ENCODE measurements at regions of chr17 and their contacts with region 1.

Region 1: GRCh38 chr17:78343187-78343542 is 16.7 kb downstream of the SOCS3 start:
- DNase-seq: no peak
- ATAC-seq: peak in 3 of 4 experiments; percentile 4 to 38 (median 4)
- H3K4me3 ChIP-seq: peak overlapping the region; percentile 29 to 30
- H3K4me3 Mint-ChIP-seq: peak overlapping the region; percentile 59 to 68 (median 64)
- H3K27ac ChIP-seq: peak overlapping the region; percentile 87
- H3K27ac Mint-ChIP-seq: peak overlapping the region; percentile 87 to 91
- H3K4me1 ChIP-seq: peaks cover 36 to 94% of the 10 kb centered on the region in 2 experiments
- H3K4me1 Mint-ChIP-seq: peaks cover 74 to 84% (median 78%) of the 10 kb centered on the region in 3 donors
- H3K27me3 ChIP-seq: no peaks in the 10 kb centered on the region
- H3K27me3 Mint-ChIP-seq: no peaks in the 10 kb centered on the region

Region 2: DNA sequence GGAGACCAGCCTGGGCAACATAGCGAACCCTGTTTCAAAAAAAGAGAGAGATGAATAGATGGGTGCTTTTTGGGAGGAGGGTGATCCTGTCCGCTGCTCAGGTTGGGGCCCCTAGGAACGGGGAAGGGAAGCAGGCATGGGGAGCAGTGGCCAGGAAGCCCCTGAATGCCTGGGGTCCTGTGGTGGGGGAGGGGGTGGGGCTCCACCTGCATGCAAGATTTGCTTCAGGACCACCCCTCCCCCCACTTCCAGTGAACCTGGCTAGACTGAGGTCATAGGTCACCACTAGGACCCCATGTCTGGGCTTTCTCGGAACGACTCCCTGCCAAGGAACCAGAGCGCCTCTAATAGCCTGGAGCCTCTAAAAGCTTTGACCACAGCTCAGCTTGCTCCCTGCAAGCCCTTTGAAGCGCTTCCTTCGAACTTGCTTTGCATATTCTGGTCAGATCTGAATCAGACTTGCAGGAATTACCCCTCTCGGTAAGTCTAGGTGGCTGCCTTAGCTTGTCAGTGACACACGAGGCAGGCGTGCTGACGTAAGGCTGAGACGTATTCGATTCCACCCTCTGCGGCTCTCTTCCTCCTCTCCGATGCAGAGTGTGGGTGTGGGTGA is 13.0 kb after region 1 on chr17:
- CTCF ChIA-PET with region 1: interaction called, 6 to 10 read pairs
- POLR2A ChIA-PET with region 1: interaction called in 1 of 2 experiments, 11 read pairs
- DNase-seq: peak; percentile 51 to 98 (median 91)
- ATAC-seq: peak; percentile 58 to 68 (median 64)
- H3K4me3 ChIP-seq: peak overlapping the region; percentile 8 to 9
- H3K4me3 Mint-ChIP-seq: peak overlapping the region; percentile 29 to 84 (median 67)
- H3K27ac ChIP-seq: peak overlapping the region; percentile 90
- H3K27ac Mint-ChIP-seq: peak overlapping the region; percentile 94 to 97
- H3K4me1 ChIP-seq: peaks cover 50 to 87% of the 10 kb centered on the region in 2 experiments
- H3K4me1 Mint-ChIP-seq: peaks cover 61 to 70% (median 70%) of the 10 kb centered on the region in 3 donors
- H3K27me3 ChIP-seq: peaks cover 0 to 2% of the 10 kb centered on the region in 2 experiments
- H3K27me3 Mint-ChIP-seq: no peaks in the 10 kb centered on the region

Region 3: GRCh38 chr17:78528541-78528940 is 185.4 kb after region 1 on chr17:
- CTCF ChIA-PET with region 1: no interaction called
- POLR2A ChIA-PET with region 1: no interaction called
- DNase-seq: no peak
- ATAC-seq: no peak
- H3K4me3 ChIP-seq: no peak overlapping the region
- H3K4me3 Mint-ChIP-seq: no peak overlapping the region
- H3K27ac ChIP-seq: no peak overlapping the region
- H3K27ac Mint-ChIP-seq: no peak overlapping the region
- H3K4me1 ChIP-seq: no peaks in the 10 kb centered on the region
- H3K4me1 Mint-ChIP-seq: peaks cover 0 to 7% (median 0%) of the 10 kb centered on the region in 3 donors
- H3K27me3 ChIP-seq: no peaks in the 10 kb centered on the region
- H3K27me3 Mint-ChIP-seq: no peaks in the 10 kb centered on the region